ENCODE measurements at regions of chr7 and their contacts with region 1.

Region 1: GRCh38 chr7:77247206-77247850 is 47.7 kb upstream of the FGL2 start:
- DNase-seq: peak; percentile 80
- H3K4me3 ChIP-seq: no peak overlapping the region
- H3K27ac ChIP-seq: no peak overlapping the region
- H3K4me1 ChIP-seq: peaks cover 4% of the 10 kb centered on the region
- H3K27me3 ChIP-seq: no peaks in the 10 kb centered on the region
- CTCF ChIP-seq: peak; percentile 65 to 69
- POLR2A ChIP-seq: no peak

Region 2: GRCh38 chr7:77217474-77218185 is 29.7 kb before region 1 on chr7:
- CTCF ChIA-PET with region 1: interaction called, 10 read pairs
- POLR2A ChIA-PET with region 1: no interaction called
- dilution Hi-C with region 1: no loop called
- intact Hi-C with region 1: no loop called
- DNase-seq: no peak
- H3K4me3 ChIP-seq: no peak overlapping the region
- H3K27ac ChIP-seq: no peak overlapping the region
- H3K4me1 ChIP-seq: no peaks in the 10 kb centered on the region
- H3K27me3 ChIP-seq: peaks cover 0 to 4% of the 10 kb centered on the region in 2 experiments
- CTCF ChIP-seq: no peak
- POLR2A ChIP-seq: no peak

Region 3: DNA sequence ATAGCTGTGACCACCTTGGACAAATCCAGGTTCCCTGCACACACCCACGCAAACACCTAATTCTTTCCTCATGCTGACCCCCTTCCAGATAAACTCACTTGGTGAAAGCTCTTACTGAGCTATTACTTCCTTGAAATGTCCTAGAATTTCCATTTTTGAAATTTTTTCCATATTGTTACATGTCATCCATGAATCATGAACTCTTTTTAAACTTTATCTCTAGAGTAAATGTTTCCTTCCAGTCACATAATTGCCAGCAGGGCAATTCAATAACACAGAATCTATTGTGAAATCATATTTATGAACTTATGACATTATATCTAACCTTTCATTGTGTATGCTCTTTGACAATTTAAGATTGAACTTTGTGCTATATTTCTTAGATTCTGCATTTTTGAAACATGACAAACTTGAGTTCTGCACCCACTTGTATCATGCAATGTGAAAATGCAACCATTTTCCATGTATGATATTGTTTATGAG is 20.9 kb before region 1 on chr7:
- CTCF ChIA-PET with region 1: interaction called, 11 read pairs
- POLR2A ChIA-PET with region 1: no interaction called
- dilution Hi-C with region 1: no loop called
- intact Hi-C with region 1: no loop called
- DNase-seq: peak; percentile 86
- H3K4me3 ChIP-seq: no peak overlapping the region
- H3K27ac ChIP-seq: no peak overlapping the region
- H3K4me1 ChIP-seq: peaks cover 3% of the 10 kb centered on the region
- H3K27me3 ChIP-seq: peaks cover 0 to 4% of the 10 kb centered on the region in 2 experiments
- CTCF ChIP-seq: no peak
- POLR2A ChIP-seq: no peak

Region 4: DNA sequence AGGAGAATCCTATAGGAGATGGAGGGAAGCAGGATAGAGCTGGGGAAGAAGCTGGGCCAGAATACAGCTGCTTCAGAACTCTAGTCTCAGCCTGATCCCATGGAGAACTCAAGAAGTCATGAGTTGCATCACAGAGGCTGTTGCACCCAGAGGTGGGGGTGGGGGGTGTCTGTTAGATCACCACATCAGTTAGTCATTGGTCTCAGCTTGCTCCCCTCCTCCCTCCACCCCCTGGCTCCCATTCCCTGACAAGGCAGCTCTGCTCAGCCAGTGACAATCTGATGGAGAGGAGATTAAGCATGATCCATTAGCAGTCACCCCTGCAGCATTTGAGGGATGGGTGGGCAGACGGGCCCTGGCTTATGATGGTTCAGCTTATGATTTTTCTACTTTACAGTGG is 10.7 kb after region 1 on chr7:
- CTCF ChIA-PET with region 1: interaction called, 11 read pairs
- POLR2A ChIA-PET with region 1: no interaction called
- dilution Hi-C with region 1: no loop called
- intact Hi-C with region 1: no loop called
- DNase-seq: no peak
- H3K4me3 ChIP-seq: no peak overlapping the region
- H3K27ac ChIP-seq: no peak overlapping the region
- H3K4me1 ChIP-seq: no peaks in the 10 kb centered on the region
- H3K27me3 ChIP-seq: no peaks in the 10 kb centered on the region
- CTCF ChIP-seq: no peak
- POLR2A ChIP-seq: no peak

Region 5: DNA sequence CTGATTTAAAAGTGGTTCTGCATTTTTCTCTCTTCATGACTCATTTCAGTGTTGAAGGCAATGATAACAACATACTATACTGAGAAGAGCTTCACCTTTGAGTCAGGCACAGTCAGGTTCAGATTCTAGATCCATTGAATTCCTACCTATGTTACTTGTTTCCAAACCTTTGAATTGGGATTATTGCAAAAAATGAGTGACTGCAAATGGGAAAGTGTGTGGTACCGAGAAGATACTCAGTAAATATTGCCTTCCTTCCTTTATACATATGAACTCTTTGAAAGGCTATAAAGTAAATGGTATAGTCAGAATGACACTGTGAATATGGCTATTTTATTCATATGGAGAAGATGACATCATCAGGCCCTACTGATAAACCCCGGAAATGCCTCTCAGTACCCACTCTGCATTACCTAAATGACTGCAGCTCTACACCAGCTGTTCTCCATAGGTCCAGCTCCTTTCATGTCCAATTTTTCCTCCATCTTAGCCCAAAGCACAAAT is 19.0 kb after region 1 on chr7:
- CTCF ChIA-PET with region 1: interaction called, 10 read pairs
- POLR2A ChIA-PET with region 1: no interaction called
- dilution Hi-C with region 1: no loop called
- intact Hi-C with region 1: no loop called
- DNase-seq: no peak
- H3K4me3 ChIP-seq: no peak overlapping the region
- H3K27ac ChIP-seq: no peak overlapping the region
- H3K4me1 ChIP-seq: peaks cover 5% of the 10 kb centered on the region
- H3K27me3 ChIP-seq: no peaks in the 10 kb centered on the region
- CTCF ChIP-seq: no peak
- POLR2A ChIP-seq: no peak

Region 6: DNA sequence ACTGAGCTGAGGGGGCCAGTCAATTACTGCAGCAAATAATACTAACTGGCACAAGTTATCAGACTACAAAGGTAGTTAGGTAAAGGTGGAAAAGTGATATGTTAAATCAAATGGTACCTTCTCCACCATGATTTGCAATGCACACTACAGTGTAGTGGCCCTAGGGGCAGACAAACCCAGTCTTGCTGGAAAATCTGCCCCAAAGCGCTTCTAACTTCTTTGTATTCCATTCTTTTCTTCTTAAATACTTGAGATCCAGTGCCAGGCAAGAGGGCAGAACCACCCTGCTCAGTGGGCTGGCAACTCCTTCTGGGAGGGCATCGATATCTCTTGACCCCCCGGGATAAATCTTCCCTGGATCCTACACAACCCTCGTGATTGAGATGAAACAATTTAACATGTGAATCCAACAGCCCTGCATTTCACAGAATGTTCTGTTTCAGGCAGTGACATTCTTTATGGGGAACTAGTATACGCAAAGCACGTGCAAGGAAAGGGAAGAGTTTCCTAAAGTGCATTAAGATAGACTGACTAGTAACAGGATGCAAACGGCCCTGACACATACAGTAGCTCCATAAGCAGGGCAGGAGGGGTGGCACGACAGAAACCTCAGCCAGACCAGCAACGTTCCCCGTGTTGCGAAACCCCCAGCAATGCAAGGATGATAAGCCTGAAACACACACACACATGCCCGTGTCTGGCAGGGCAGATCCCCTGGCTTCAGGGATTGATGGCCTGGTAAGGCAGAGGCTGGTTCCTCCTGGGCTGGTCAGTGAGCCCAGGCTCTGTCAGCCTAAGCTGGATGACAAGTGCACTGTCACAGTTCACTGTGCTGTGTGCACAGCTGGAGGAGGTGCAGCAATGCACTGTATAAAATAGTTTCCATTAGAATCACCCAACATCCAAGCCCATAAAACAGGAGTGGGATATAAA is 79.6 kb after region 1 on chr7:
- CTCF ChIA-PET with region 1: interaction called, 103 read pairs
- POLR2A ChIA-PET with region 1: interaction called, 6 read pairs
- dilution Hi-C with region 1: no loop called
- intact Hi-C with region 1: loop called (anchors 1 kb)
- DNase-seq: peak; percentile 21
- H3K4me3 ChIP-seq: no peak overlapping the region
- H3K27ac ChIP-seq: no peak overlapping the region
- H3K4me1 ChIP-seq: peaks cover 60% of the 10 kb centered on the region
- H3K27me3 ChIP-seq: no peaks in the 10 kb centered on the region
- CTCF ChIP-seq: no peak
- POLR2A ChIP-seq: no peak

Measured in endothelial cell of umbilical vein (primary cell).